Ascending aorta (tissue), 2 donors: ENCODE measurements at regions of chr20 and their contacts with region 1.

Region 1: DNA sequence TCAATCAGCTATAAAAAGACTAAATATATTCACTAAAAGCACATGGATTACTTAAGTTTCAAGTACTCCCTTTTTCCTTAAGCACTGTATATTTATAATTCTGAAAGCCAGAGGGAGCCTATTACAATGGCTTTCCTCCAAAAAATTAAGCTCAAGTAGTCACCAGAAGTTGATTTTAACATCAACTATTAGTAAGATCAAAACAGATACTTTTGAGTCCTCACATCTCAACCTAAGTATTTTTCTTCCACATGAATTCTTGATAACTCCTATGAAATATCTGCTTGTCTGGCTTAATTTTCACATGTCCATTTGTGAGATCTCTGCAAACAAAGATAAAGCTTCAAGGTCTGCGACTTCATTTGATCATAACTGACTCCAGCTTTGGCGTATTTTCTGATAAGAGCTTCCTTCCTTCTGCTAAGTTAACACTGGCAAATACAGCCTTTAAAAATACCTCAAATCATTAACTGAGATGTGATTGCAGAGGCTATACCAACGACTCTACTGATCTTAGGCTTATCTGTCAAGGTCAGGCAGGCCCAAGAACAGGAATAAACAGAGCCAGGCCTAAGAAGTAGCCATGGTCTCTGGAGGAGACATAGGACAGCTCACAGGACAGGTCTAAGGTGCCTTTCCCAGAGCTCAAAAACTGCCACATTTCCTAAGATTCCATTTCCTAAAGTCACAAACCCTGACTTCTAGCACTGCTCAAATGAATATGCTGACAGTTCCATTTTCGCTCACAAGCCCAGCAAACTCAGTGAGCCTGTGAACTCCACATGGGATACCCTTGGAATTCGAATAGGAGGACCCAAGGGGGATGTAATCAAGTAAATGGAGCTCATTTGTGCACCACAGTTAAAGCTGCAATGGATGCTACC is 10.0 kb downstream of the SNX5 start:
- DNase-seq: no peak
- H3K4me3 ChIP-seq: no peak overlapping the region
- H3K27ac ChIP-seq: peak overlapping the region; percentile 33 to 60
- H3K4me1 ChIP-seq: peaks cover 3 to 34% of the 10 kb centered on the region in 2 donors
- H3K27me3 ChIP-seq: no peaks in the 10 kb centered on the region
- CTCF ChIP-seq: peak in 1 of 3 experiments; percentile 35

Region 2: GRCh38 chr20:17569616-17570346 is 388.8 kb before region 1 on chr20 and contains the start of gene DSTN:
- intact Hi-C with region 1: no loop called
- DNase-seq: peak; percentile 76 to 97
- H3K4me3 ChIP-seq: peak within 1 kb of the TSS; percentile 93 to 99
- H3K27ac ChIP-seq: peak within 1 kb of the TSS; percentile 98 to 100
- H3K4me1 ChIP-seq: peaks cover 11 to 34% of the 10 kb centered on the region in 2 donors
- H3K27me3 ChIP-seq: no peaks in the 10 kb centered on the region
- CTCF ChIP-seq: no peak
- total RNA-seq, gene DSTN: 452 TPM

Region 3: DNA sequence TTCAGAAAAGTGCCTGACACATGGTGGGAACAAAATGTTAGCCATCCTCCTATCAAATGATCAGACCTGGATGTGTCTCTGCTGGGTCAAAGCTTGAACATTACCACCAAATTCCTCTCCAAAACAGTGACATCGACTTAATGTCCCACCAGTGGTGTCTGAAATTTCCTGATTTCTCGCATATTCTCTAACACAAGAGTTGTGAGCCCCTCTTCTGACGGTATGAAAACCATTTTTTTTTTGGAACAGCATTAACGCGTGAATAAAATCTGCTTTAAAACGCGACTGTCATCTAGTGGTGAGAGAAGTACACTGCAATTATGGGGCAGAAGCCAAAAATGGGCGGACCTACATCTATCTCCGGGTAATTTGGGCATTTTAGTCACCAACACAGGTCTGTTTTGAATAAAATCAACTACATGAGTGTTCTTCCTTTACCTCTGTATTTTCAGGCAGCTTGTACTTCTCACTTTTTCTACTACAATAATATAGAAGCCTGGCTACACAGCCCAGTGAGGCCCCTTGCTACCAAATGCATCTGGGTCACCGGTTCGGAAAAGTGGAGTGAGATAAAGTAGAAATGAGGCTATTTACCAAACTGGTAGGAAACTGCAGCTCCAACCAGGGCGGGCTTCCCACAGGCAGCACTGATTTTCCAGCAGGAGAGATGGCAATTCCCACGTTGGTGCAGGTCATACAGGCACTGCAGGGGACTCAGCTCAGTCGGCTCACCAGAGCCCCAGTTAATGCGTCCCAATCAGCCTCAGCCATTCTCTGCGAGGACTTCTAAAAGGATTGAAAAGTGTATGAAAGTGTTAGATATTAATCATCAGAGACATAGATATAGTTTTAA is 37.6 kb after region 1 on chr20:
- intact Hi-C with region 1: loop called (anchors 5 kb)
- DNase-seq: no peak
- H3K4me3 ChIP-seq: peak overlapping the region in 1 of 2 donors; percentile 4
- H3K27ac ChIP-seq: no peak overlapping the region
- H3K4me1 ChIP-seq: no peaks in the 10 kb centered on the region
- H3K27me3 ChIP-seq: no peaks in the 10 kb centered on the region
- CTCF ChIP-seq: peak; percentile 91 to 99 (median 92)